Posterior vena cava (tissue), 2 donors: ENCODE measurements at regions of chr3 and their contacts with region 1.

Region 1: DNA sequence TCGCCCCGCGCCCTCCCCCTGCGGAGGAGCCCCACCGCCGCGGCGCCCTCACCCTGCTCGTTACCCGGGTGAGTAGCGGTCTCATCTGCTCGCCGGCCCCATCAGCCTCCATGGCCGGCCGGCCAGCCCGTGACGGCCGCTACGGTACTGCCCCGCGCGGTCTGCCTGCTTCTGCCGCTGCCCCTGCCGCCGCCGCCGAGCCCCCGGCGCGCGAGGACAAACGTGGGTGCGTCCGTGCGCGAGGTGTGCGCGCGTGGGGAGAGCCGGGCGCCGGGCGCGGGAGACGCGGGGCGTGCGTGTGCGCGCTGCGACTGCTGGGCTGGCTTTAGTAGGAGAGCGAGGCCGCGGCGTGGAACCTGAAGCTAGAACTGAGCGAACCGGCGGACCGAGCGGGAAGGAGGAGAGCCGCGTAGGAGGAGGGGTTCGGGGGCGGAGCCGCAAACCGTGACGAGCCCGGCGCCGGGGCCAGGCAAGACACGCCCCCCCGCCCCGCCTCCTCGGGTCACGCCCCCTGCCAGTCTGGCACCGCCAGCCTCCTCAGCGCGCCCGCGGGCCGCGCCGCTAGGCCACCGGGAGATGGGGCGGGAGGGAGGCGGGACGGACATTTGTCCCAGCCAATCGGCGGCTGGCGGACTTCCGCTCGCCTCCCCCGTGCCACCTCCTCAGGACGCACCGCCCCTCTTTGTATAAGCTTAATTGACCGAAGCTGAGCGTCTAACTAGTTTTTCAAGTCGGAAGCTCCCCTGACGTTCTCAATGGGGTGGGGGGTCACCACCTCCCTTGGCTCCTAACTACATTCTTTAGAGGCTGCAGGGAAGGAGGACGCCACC is at the start of gene SLC4A7:
- DNase-seq: peak; percentile 99
- total RNA-seq, gene SLC4A7: 30.9 to 50.2 TPM

Region 2: DNA sequence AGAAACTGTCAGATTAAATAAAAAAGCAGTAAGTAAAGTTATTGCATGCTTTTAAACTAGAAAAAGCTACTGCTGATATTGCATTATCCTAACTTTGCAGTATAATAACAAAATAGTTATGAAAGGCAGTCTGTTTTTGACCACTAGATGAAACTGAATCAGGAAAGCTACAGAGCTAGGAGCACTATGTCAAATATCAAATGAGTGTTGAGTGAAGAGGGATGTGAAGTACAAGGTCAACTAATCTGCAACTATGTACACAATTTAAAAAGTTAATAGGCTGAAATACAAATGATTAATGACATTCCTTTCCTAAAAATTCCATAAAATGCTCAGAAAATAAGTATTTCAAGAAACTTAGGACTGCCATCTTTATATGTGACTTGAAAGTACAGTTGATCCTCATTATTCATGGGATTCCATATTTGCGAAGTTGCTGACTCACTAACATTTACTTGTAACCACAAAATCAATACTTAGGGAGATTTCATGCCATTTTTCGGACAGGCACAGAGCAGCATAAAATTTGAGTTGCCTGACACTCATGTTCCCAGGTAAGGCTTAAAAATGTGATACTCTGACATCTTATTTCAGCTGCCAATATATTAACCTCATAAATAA is 34.6 kb before region 1 on chr3:
- intact Hi-C with region 1: loop called in 1 of 2 experiments (anchors 2 kb)
- DNase-seq: no peak

Region 3: DNA sequence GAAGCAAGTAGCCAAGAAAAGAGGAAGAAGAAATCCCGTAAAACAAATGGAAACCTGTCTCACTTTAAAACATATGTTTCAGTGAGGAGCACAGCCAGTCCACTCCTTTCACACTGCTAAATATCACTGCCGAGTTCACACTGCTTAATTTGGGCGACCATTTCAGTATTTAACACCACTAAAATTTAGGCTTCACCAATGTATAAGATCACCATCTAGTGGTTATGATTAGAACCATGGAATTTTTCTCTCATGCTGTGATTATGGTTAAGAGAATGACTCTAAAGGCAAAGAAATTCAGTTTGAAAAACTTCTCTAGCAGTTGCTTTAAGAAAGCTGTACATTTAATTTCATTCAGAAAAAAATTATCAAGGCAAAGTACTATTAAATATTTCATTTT is 16.7 kb before region 1 on chr3:
- intact Hi-C with region 1: no loop called
- DNase-seq: no peak

Region 4: DNA sequence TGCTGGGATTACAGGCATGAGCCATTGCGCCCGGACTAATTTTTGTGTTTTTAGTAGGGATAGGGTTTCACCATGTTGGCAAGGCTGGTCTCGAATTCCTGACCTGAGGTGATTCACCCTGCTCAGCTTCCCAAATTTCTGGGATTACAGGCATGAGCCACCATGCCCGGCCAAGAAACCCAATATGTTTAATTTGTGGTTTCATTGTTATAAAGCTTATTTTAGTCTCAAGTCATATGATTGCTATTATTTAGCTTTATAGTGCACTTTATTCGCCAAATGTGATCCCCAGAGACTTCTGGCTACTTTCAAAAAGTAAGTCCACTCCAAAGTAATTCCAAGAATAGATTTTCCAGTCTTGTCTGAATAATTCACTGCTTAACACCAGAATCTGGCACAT is 19.3 kb after region 1 on chr3:
- intact Hi-C with region 1: loop called in 1 of 2 experiments (anchors 2 kb)
- DNase-seq: no peak

Region 5: DNA sequence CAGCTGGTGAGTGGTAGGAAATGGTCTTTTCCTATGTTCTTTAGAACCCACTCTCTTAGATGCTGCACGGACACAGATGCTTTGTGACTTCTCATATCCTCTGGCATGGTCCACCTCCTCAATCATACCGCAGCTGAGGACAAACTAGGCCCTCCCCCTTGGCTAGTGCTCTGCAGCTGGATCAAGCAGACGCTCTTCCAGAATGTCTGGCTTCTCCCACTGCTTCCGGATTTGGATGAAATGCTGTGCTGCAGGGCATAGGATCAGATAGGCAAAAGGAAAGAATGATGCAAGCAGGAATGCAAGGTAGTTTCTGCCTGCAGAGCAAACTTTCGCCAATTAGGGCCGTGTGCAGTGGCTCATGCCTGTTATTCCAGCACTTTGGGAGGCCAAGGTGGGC is 75.6 kb after region 1 on chr3:
- intact Hi-C with region 1: loop called in 1 of 2 experiments (anchors 10 kb)
- DNase-seq: peak; percentile 83